ENCODE measurements at regions of chr1 and their contacts with region 1.

Region 1: DNA sequence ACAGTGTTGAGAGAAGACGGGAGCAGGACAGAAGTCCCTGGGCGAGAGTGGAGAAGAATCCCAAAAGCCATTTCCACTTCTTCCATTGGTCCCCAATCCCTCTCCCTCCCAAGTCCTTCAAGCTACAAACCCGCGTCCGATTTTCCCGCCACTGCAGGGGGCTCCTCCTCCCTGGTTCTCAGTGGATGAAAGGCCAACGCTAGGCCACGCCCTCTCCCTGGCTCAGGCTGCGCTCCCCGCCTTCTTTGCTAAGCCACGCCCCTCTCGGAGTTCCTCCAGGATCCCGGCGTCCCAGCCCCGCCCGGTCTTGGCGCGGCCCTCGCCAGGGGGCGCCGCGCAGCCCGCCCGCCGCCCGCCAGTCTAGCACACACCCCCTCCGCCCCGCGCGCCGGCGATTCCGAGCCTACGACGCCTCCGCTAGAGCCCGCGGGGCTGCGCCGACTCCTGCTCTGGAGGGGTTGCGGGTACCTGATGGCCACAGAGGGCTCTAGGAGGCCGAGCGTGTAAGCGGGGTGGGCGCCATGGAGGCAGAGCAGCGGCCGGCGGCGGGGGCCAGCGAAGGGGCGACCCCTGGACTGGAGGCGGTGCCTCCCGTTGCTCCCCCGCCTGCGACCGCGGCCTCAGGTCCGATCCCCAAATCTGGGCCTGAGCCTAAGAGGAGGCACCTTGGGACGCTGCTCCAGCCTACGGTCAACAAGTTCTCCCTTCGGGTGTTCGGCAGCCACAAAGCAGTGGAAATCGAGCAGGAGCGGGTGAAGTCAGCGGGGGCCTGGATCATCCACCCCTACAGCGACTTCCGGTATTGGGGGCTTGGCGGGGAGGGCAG is at the start of gene HCN3:
- DNase-seq: peak; percentile 70 to 99 (median 90)
- ATAC-seq: peak; percentile 31
- H3K4me3 ChIP-seq: peak within 1 kb of the TSS; percentile 61
- H3K4me3 Mint-ChIP-seq: peak within 1 kb of the TSS; percentile 82
- H3K27ac ChIP-seq: peak within 1 kb of the TSS; percentile 13 to 29
- H3K27ac Mint-ChIP-seq: peak within 1 kb of the TSS; percentile 65
- H3K4me1 ChIP-seq: peaks cover 35% of the 10 kb centered on the region
- H3K4me1 Mint-ChIP-seq: peaks cover 43% of the 10 kb centered on the region
- H3K27me3 ChIP-seq: no peaks in the 10 kb centered on the region
- H3K27me3 Mint-ChIP-seq: no peaks in the 10 kb centered on the region
- CTCF ChIP-seq: peak; percentile 59
- total RNA-seq, gene HCN3: 1.3 to 1.8 TPM

Region 2: GRCh38 chr1:155261852-155262673 is 15.2 kb before region 1 on chr1 and contains the start of gene SCAMP3:
- CTCF ChIA-PET with region 1: interaction called, 3 read pairs
- POLR2A ChIA-PET with region 1: interaction called, 54 read pairs
- intact Hi-C with region 1: loop called (anchors 1 kb)
- DNase-seq: peak; percentile 62 to 95 (median 79)
- ATAC-seq: peak; percentile 93
- H3K4me3 ChIP-seq: peak within 1 kb of the TSS; percentile 100
- H3K4me3 Mint-ChIP-seq: peak within 1 kb of the TSS; percentile 95
- H3K27ac ChIP-seq: peak within 1 kb of the TSS; percentile 71 to 72
- H3K27ac Mint-ChIP-seq: peak within 1 kb of the TSS; percentile 82
- H3K4me1 ChIP-seq: peaks cover 28% of the 10 kb centered on the region
- H3K4me1 Mint-ChIP-seq: peaks cover 40% of the 10 kb centered on the region
- H3K27me3 ChIP-seq: no peaks in the 10 kb centered on the region
- H3K27me3 Mint-ChIP-seq: no peaks in the 10 kb centered on the region
- CTCF ChIP-seq: no peak
- total RNA-seq, gene SCAMP3: 54.8 to 55.6 TPM

Region 3: DNA sequence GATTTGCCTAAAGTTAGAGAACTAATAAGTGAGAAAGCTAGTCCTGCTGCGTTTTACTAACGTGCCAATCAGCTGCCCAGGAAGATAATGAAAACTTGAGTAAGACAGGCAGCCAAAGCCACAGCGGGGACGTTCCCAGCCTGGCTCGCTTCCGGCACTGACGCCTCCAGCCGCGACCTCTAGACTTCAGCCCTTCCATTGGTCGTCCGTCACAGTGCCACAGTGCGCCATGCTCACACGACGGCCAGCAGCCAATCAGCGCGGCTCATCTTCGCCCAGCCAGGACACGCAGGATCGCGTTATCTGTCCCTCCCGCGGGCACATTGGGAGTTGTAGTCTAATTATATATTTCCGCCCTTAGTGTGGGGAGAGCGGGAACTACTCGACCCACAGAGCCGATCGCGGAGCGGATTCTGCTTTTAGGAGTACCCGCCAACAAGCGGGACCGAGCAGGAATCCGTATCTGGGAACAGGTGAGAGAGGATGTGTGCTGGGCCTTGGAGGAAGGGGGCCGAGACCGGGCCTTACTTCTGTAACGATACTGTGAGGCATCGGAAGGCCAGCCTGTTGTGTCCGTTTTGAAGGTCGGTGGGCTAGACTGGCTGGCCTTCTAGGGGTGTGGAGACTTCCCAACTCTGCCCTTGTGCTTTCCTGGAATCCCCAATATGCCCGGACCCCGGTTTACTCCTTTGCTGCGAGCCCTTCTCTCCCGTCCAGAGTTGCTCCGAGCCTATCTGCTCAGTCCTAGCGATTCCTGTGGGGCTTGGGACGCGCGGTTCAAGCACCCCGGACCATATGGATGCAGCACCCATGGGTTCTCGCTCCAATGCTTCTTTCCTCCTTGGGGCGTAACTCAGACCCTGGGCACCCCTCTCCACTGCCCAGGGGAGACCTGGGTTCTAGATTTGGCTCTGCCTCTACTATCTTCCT is 31.5 kb after region 1 on chr1 and contains the start of gene FDPS:
- CTCF ChIA-PET with region 1: interaction called, 5 read pairs
- POLR2A ChIA-PET with region 1: interaction called, 9 read pairs
- intact Hi-C with region 1: loop called (anchors 1 to 2 kb)
- DNase-seq: peak; percentile 90 to 100 (median 94)
- ATAC-seq: peak; percentile 97
- H3K4me3 ChIP-seq: peak within 1 kb of the TSS; percentile 93
- H3K4me3 Mint-ChIP-seq: peak within 1 kb of the TSS; percentile 94
- H3K27ac ChIP-seq: peak within 1 kb of the TSS; percentile 92 to 95
- H3K27ac Mint-ChIP-seq: peak within 1 kb of the TSS; percentile 96
- H3K4me1 ChIP-seq: peaks cover 29% of the 10 kb centered on the region
- H3K4me1 Mint-ChIP-seq: peaks cover 28% of the 10 kb centered on the region
- H3K27me3 ChIP-seq: no peaks in the 10 kb centered on the region
- H3K27me3 Mint-ChIP-seq: no peaks in the 10 kb centered on the region
- CTCF ChIP-seq: no peak
- total RNA-seq, gene FDPS: 44.0 to 47.3 TPM

Region 4: DNA sequence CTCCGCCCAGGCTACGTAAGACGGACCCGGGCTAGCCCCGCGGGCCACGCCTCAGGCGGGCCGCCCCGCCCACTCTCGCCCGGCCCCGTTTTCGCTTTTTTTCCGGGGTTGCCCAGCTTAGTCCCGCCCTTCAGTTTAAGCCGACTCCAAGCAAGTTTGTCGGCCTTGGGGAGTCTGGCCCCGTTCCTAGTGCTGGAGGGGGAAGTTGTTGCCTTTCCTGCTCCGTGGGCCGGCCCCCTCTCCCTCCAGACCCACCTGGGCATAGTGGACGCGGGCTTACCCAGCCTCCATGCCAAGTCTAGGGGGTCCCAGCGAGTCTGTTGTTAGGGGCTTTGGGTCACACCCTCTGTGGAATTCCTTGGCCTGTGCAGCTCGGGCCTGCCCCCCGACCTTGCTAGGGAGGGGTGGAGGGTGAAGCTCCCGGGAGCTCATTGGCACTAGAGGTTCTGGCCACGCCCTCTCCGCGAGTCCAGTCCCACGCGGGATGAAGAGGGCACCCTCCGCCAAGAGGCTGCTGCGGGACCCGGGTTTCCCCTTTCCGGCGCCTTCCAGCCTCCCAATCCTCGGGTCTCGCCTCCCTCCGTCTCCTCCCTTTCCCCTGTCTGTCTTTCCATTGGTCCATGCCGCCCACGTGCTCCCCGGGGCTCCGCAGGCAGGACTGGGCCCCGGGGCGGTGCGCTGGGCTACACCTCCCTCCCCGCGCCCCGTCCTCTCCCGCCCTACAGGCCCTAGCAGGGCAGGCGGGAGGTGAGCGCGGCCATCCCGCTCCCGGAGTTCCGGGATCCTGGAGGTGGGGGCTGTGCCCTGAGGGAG is 46.7 kb after region 1 on chr1:
- CTCF ChIA-PET with region 1: interaction called, 23 read pairs
- POLR2A ChIA-PET with region 1: interaction called, 28 read pairs
- intact Hi-C with region 1: loop called (anchors 1 kb)
- DNase-seq: peak; percentile 69 to 94 (median 80)
- ATAC-seq: peak; percentile 79
- H3K4me3 ChIP-seq: peak overlapping the region; percentile 100
- H3K4me3 Mint-ChIP-seq: peak overlapping the region; percentile 92
- H3K27ac ChIP-seq: peak overlapping the region; percentile 93 to 97
- H3K27ac Mint-ChIP-seq: peak overlapping the region; percentile 69
- H3K4me1 ChIP-seq: peaks cover 49% of the 10 kb centered on the region
- H3K4me1 Mint-ChIP-seq: peaks cover 46% of the 10 kb centered on the region
- H3K27me3 ChIP-seq: no peaks in the 10 kb centered on the region
- H3K27me3 Mint-ChIP-seq: no peaks in the 10 kb centered on the region
- CTCF ChIP-seq: no peak

Region 5: DNA sequence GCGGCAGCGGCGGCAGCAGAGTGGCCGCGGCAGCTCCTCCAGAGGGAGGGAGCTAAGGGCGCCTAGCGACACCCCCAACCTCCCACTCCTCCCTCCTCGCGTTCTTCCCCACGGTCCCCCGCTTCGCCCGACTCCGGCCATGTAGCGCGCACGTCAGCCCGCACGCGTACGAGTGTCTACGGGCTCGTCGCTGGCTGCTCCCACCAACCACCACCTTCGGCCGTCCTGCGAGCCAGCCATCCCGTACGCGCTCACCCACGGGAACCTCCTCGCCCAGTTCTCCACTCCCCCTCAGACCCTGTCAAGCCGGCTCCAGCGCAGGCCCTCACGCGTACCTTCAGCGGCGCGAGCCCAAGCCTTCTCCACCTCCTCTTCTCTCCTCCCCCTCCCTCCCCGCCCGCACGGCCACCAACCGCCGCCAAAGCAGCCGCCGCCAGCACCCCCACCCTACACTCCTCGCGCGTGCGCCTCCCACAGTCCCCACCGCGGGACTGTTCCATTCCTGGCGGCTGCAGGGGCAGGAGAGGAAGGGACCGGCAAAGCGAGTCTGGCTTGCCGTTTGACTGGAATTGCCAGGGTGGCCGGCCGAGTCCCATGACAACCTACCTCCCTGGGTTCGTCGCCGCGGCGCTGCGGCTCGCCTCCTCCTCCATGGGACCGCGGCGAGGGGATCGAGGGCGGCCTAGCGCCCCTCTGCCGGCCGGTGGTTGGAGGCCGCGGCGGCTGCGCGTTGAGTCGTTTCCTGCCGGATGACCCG is 411.2 kb after region 1 on chr1 and contains the start of gene YY1AP1:
- CTCF ChIA-PET with region 1: no interaction called
- POLR2A ChIA-PET with region 1: no interaction called
- intact Hi-C with region 1: loop called in 1 of 2 experiments (anchors 5 kb)
- DNase-seq: peak; percentile 80 to 94 (median 89)
- ATAC-seq: peak; percentile 85
- H3K4me3 ChIP-seq: peak within 1 kb of the TSS; percentile 73
- H3K4me3 Mint-ChIP-seq: peak within 1 kb of the TSS; percentile 98
- H3K27ac ChIP-seq: peak within 1 kb of the TSS; percentile 89 to 92
- H3K27ac Mint-ChIP-seq: peak within 1 kb of the TSS; percentile 95
- H3K4me1 ChIP-seq: peaks cover 31% of the 10 kb centered on the region
- H3K4me1 Mint-ChIP-seq: peaks cover 46% of the 10 kb centered on the region
- H3K27me3 ChIP-seq: no peaks in the 10 kb centered on the region
- H3K27me3 Mint-ChIP-seq: no peaks in the 10 kb centered on the region
- CTCF ChIP-seq: no peak
- total RNA-seq, gene YY1AP1: 71.1 to 81.2 TPM

Region 6: DNA sequence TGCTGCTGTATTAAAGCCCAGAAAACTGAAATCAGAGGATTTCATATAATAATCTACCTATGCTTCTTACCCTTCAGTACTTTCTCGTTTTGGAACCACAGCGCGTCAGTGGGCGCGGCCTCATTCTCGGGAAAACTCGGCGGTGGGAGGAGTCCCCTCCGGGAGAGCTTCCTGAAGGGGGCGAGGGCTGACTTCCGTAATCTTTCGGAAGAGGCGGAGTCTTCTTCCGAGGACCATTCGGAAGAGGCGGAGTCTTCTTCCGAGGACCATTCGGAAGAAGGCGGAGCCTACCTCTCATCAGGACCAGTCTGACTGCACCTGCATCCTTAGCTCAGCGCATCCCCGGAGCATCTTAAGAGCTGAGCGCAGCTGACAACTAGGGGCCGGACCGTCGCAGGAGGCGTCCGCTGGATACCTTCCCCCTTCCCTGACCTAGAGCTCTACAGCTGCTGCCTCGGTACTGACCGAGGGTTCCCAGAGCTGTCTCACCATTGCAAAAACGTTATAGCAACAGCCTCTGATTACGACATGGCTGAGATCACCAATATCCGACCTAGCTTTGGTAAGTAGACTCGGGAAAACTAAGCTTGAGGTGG is 582.0 kb after region 1 on chr1 and contains the start of gene SYT11:
- CTCF ChIA-PET with region 1: no interaction called
- POLR2A ChIA-PET with region 1: interaction called, 6 read pairs
- intact Hi-C with region 1: loop called in 1 of 2 experiments (anchors 10 kb)
- DNase-seq: peak; percentile 83 to 97 (median 92)
- ATAC-seq: peak; percentile 89
- H3K4me3 ChIP-seq: peak within 1 kb of the TSS; percentile 62
- H3K4me3 Mint-ChIP-seq: peak within 1 kb of the TSS; percentile 93
- H3K27ac ChIP-seq: peak within 1 kb of the TSS; percentile 42 to 81
- H3K27ac Mint-ChIP-seq: peak within 1 kb of the TSS; percentile 81
- H3K4me1 ChIP-seq: peaks cover 38% of the 10 kb centered on the region
- H3K4me1 Mint-ChIP-seq: peaks cover 33% of the 10 kb centered on the region
- H3K27me3 ChIP-seq: peaks cover 0 to 8% of the 10 kb centered on the region in 2 experiments
- H3K27me3 Mint-ChIP-seq: peaks cover 25% of the 10 kb centered on the region
- CTCF ChIP-seq: no peak
- total RNA-seq, gene SYT11: 6.1 to 6.3 TPM

Measured in CD4-positive, alpha-beta T cell (primary cell).